ENCODE measurements at regions of chr19 and their contacts with region 1.

Region 1: GRCh38 chr19:35140962-35141637 is 2.0 kb upstream of the FXYD7 start:
- DNase-seq: peak; percentile 88 to 97 (median 92)
- ATAC-seq: peak; percentile 93
- H3K4me3 ChIP-seq: peak overlapping the region; percentile 65
- H3K4me3 Mint-ChIP-seq: peak overlapping the region; percentile 80 to 96 (median 85)
- H3K27ac ChIP-seq: no peak overlapping the region
- H3K27ac Mint-ChIP-seq: peak overlapping the region; percentile 78 to 93 (median 84)
- H3K4me1 ChIP-seq: peaks cover 28 to 34% of the 10 kb centered on the region in 2 donors
- H3K4me1 Mint-ChIP-seq: peaks cover 31 to 47% (median 37%) of the 10 kb centered on the region in 7 donors
- H3K27me3 ChIP-seq: no peaks in the 10 kb centered on the region
- H3K27me3 Mint-ChIP-seq: peaks cover 0 to 33% (median 0%) of the 10 kb centered on the region in 5 donors

Region 2: GRCh38 chr19:35066691-35067563 is 74.2 kb before region 1 on chr19:
- CTCF ChIA-PET with region 1: interaction called, 12 read pairs
- POLR2A ChIA-PET with region 1: interaction called, 8 read pairs
- intact Hi-C with region 1: loop called (anchors 1 kb)
- DNase-seq: peak; percentile 74 to 91 (median 87)
- ATAC-seq: peak; percentile 95
- H3K4me3 ChIP-seq: no peak overlapping the region
- H3K4me3 Mint-ChIP-seq: peak overlapping the region in 2 of 10 donors; percentile 3 to 24
- H3K27ac ChIP-seq: no peak overlapping the region
- H3K27ac Mint-ChIP-seq: peak overlapping the region in 6 of 9 donors; percentile 8 to 80 (median 49)
- H3K4me1 ChIP-seq: no peaks in the 10 kb centered on the region
- H3K4me1 Mint-ChIP-seq: peaks cover 0 to 13% (median 7%) of the 10 kb centered on the region in 7 donors
- H3K27me3 ChIP-seq: no peaks in the 10 kb centered on the region
- H3K27me3 Mint-ChIP-seq: no peaks in the 10 kb centered on the region

Region 3: GRCh38 chr19:35154525-35155406 is 13.7 kb after region 1 on chr19 and contains the start of gene FXYD5:
- CTCF ChIA-PET with region 1: interaction called, 45 read pairs
- POLR2A ChIA-PET with region 1: interaction called, 54 read pairs
- intact Hi-C with region 1: loop called (anchors 1 kb)
- DNase-seq: peak; percentile 41 to 81 (median 65)
- ATAC-seq: peak; percentile 82
- H3K4me3 ChIP-seq: peak within 1 kb of the TSS; percentile 93
- H3K4me3 Mint-ChIP-seq: peak within 1 kb of the TSS; percentile 98 to 100 (median 99)
- H3K27ac ChIP-seq: peak within 1 kb of the TSS; percentile 94
- H3K27ac Mint-ChIP-seq: peak within 1 kb of the TSS; percentile 96 to 99 (median 99)
- H3K4me1 ChIP-seq: peaks cover 23 to 32% of the 10 kb centered on the region in 2 donors
- H3K4me1 Mint-ChIP-seq: peaks cover 38 to 60% (median 55%) of the 10 kb centered on the region in 7 donors
- H3K27me3 ChIP-seq: no peaks in the 10 kb centered on the region
- H3K27me3 Mint-ChIP-seq: peaks cover 0 to 5% (median 0%) of the 10 kb centered on the region in 5 donors
- total RNA-seq, gene FXYD5: 362 to 458 (median 387) TPM

Region 4: GRCh38 chr19:35269421-35270117 is 128.5 kb after region 1 on chr19:
- CTCF ChIA-PET with region 1: interaction called, 9 read pairs
- POLR2A ChIA-PET with region 1: interaction called, 40 read pairs
- intact Hi-C with region 1: loop called (anchors 1 kb)
- DNase-seq: peak; percentile 50 to 79 (median 66)
- ATAC-seq: peak; percentile 69
- H3K4me3 ChIP-seq: peak overlapping the region; percentile 44
- H3K4me3 Mint-ChIP-seq: peak overlapping the region; percentile 64 to 93 (median 75)
- H3K27ac ChIP-seq: peak overlapping the region; percentile 66
- H3K27ac Mint-ChIP-seq: peak overlapping the region; percentile 40 to 90 (median 74)
- H3K4me1 ChIP-seq: peaks cover 6 to 17% of the 10 kb centered on the region in 2 donors
- H3K4me1 Mint-ChIP-seq: peaks cover 28 to 54% (median 45%) of the 10 kb centered on the region in 7 donors
- H3K27me3 ChIP-seq: no peaks in the 10 kb centered on the region
- H3K27me3 Mint-ChIP-seq: no peaks in the 10 kb centered on the region

Region 5: DNA sequence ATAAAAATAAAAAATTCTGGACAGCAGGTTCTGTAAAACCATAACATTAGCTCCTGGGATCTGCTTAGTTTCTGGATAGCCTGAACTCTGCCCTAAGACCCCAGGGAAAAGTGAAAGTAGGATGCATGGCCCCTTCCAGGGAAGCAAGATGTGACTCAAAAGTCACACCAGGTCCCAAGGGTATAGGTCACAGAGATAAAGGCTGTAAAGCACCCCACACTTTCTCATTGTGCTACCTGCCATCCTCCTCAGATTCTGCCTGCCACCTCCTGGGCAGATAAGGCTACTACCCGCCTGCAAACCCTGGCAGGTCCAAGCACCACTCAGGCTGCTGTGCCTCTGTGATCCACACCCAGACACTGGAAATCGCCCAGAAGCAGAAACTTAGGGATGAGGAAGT is 327.5 kb after region 1 on chr19:
- CTCF ChIA-PET with region 1: no interaction called
- POLR2A ChIA-PET with region 1: interaction called, 4 read pairs
- intact Hi-C with region 1: loop called (anchors 2 to 10 kb)
- DNase-seq: peak; percentile 30 to 66 (median 57)
- ATAC-seq: peak; percentile 99
- H3K4me3 ChIP-seq: no peak overlapping the region
- H3K4me3 Mint-ChIP-seq: no peak overlapping the region
- H3K27ac ChIP-seq: no peak overlapping the region
- H3K27ac Mint-ChIP-seq: no peak overlapping the region
- H3K4me1 ChIP-seq: peaks cover 0 to 10% of the 10 kb centered on the region in 2 donors
- H3K4me1 Mint-ChIP-seq: peaks cover 4 to 9% (median 7%) of the 10 kb centered on the region in 7 donors
- H3K27me3 ChIP-seq: no peaks in the 10 kb centered on the region
- H3K27me3 Mint-ChIP-seq: peaks cover 0 to 8% (median 0%) of the 10 kb centered on the region in 5 donors

Measured in naive thymus-derived CD4-positive, alpha-beta T cell (primary cell).